GM13977 (cell line): ENCODE measurements at regions of chrX and their contacts with region 1.

Region 1: DNA sequence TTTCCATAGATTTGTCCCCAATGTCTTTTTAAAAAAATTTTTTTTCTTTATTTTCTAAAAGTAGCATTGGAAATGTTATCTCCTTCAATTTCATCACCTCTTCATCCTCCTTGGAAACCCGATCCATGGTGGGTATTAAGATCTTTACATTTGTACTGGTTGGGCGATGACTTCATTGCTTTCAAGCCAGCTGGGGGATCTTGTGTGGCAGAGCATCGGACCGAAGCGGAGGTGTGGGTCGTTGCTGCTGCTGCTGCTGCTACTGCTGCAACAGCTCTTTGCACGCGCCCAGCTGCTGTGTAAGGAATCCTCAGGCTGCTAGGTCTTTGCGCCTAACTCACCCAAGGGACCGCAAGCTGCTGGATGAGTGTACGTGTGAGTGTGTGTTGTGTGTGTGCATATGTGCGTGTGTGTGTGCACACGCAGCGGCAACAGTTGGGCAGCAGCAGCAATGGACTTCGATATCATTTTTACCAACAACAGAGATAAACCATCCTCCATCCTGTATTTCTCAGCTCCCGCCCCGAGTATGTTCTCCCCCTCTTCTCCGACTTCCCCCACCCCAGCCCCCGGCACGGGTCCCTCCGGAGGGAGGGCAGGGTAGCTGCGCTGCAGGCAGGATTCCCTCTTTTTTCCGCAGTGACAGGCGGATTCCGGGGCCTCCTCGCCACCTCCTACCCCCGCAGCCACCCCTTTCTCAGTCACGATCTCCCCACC is 768 bp upstream of the CDKL5 start:
- DNase-seq: peak; percentile 48
- CTCF ChIP-seq: no peak

Region 2: DNA sequence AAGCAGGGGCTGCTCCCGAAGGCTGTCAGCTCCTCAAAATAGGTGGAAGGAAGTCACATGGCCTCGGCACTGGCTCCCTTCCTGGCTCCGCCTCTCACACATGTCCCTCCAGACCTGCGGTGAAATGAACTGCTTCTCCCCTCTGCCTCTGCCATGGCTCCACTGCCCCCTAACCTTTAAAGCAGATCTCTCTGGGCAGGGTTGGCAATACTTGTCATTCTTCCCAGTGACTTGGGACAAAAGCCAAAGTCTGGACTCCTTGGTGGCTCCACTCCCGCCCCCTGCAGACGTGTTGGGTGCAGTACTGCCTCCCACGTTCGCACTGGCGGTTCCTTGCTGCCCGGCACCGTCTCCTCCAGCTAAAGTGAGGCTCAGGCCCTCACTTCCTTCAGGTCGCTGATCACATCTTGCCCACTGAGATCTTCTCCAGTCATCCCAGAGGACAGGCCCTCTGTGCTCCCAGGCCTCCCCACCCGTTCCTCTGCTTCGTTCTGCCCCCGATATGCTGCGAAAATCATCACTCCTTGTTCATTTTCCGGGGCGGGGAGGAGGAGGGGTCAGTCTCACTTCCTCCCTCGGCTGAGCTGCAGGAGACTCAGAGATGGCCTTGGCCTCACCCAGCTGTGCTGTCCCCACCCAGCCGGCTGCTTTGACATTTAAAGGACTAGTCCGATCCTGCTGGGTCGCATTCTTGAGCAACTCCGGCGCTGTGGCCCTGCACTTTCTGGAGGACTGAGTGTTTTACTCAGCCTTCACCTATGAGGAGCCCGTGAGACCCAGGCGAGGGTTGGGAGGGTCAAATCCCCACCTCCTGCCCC is 461.9 kb after region 1 on chrX:
- in situ Hi-C with region 1: loop called (anchors 25 kb)
- DNase-seq: peak; percentile 67
- CTCF ChIP-seq: peak; percentile 51